ENCODE measurements at regions of chr6 and their contacts with region 1.

Region 1: GRCh38 chr6:33344701-33345697 is 27.5 kb upstream of the ZBTB22 start:
- DNase-seq: peak; percentile 72
- CTCF ChIP-seq: peak; percentile 57

Region 2: DNA sequence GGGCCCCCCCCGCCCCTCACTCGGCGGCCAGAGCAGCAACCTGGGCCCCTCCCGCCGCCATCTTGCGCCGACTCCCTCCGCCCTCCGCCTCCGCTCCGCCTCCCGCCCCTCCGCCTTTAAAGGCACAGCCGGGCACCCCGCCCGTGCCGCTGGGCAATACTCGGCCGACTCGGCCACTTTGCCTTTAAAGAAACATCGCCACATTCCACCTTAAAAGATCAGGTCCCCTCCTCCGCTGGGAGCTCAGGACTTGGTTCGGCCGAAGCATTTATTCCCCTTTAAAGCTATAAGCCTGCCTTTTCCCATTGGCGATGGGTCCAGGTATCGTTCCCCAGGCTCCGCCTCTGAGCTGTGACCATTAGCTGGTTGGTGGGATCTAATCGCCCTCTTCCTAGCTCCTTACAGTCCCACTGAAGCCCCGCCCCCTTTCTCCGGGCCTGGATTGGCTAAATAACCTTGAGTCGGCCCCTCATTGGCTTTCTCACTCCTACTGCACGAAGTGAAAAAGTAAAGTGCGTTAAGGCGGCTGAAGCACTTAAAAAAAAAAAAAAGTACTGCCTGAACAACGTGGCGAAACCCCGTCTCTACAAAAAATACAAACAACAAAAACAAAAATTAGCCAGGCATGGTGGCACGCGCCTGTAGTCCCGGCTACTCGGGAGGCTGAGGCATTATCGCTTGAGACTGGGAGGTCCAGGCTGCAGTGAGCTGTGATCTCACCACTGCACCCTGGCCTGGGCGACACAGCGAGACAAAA is 27.2 kb before region 1 on chr6 and contains the start of gene ZBTB22:
- CTCF ChIA-PET with region 1: interaction called, 13 read pairs
- POLR2A ChIA-PET with region 1: interaction called, 6 read pairs
- DNase-seq: peak; percentile 89
- CTCF ChIP-seq: no peak

Region 3: GRCh38 chr6:33359331-33359730 is 14.3 kb after region 1 on chr6:
- CTCF ChIA-PET with region 1: interaction called, 20 read pairs
- POLR2A ChIA-PET with region 1: no interaction called
- DNase-seq: no peak
- CTCF ChIP-seq: no peak